ENCODE measurements at regions of chr4 and their contacts with region 1.

Region 1: DNA sequence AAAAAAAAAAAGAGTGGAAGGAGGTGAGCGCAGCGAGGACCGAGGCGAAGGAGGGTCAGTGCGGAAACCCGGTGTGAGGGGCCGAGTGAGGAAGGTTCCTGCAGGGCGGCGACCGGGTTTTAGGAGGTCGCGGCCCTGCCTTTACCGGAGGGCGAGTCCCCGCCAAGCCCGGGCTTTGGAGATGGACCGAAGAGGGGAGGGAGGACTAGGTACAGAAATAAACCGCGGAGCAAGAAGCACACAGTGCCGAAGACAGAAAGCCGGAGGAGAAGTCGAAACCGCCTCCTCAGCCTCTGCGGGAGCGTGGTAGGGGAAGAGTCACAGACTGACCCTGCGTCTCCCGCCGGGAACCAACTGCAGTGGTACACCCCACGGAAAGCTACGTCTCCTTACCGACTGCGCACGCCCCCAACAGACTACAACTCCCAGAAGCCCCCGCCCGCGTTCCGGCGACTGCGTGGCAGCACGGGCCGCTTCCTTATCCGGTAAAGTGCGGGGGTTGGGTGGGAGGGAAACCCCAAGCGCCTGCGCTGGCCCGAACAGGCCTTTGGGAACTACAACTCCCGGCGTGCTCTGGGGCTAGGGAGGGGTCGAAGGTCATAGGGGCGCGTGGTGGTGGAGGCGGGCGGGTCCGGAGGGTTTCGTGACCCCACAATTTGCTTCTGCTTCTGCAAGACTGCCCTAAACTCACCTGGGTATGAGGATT is at the start of gene NFXL1:
- DNase-seq: peak; percentile 98
- H3K4me3 Mint-ChIP-seq: peak within 1 kb of the TSS; percentile 97
- H3K27ac Mint-ChIP-seq: peak within 1 kb of the TSS; percentile 93
- H3K4me1 Mint-ChIP-seq: peaks cover 30% of the 10 kb centered on the region
- H3K27me3 Mint-ChIP-seq: no peaks in the 10 kb centered on the region
- total RNA-seq, gene NFXL1: 10.9 to 12.0 TPM

Region 2: DNA sequence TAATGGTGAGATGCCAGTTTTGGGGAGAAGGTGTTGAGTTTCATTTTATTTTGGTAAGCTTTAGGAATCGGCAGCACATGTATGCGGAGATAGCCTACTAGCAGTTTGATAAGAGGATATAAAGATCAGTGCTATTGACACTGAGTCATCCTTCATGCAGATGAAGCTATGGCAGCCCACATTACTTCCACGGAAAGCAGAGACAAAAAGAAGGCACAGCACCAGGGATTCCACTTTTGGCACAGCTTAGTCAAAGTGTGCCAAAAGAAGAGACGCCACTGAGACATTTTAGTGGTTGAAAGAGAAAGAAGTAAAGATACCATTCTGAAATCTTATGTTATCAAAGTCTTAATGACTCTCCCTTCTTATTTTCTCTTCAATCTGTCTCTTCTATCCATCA is 779.2 kb before region 1 on chr4:
- CTCF ChIA-PET with region 1: no interaction called
- POLR2A ChIA-PET with region 1: no interaction called
- intact Hi-C with region 1: no loop called
- DNase-seq: no peak
- H3K4me3 Mint-ChIP-seq: no peak overlapping the region
- H3K27ac Mint-ChIP-seq: no peak overlapping the region
- H3K4me1 Mint-ChIP-seq: no peaks in the 10 kb centered on the region
- H3K27me3 Mint-ChIP-seq: peaks cover 1% of the 10 kb centered on the region

Region 3: GRCh38 chr4:47463235-47463956 is 451.0 kb before region 1 on chr4 and contains the start of gene COMMD8:
- CTCF ChIA-PET with region 1: no interaction called
- POLR2A ChIA-PET with region 1: interaction called, 4 read pairs
- intact Hi-C with region 1: loop called (anchors 1 kb)
- DNase-seq: peak; percentile 98
- H3K4me3 Mint-ChIP-seq: peak within 1 kb of the TSS; percentile 85
- H3K27ac Mint-ChIP-seq: peak within 1 kb of the TSS; percentile 68
- H3K4me1 Mint-ChIP-seq: peaks cover 26% of the 10 kb centered on the region
- H3K27me3 Mint-ChIP-seq: no peaks in the 10 kb centered on the region
- total RNA-seq, gene COMMD8: 27.5 to 27.9 TPM

Region 4: DNA sequence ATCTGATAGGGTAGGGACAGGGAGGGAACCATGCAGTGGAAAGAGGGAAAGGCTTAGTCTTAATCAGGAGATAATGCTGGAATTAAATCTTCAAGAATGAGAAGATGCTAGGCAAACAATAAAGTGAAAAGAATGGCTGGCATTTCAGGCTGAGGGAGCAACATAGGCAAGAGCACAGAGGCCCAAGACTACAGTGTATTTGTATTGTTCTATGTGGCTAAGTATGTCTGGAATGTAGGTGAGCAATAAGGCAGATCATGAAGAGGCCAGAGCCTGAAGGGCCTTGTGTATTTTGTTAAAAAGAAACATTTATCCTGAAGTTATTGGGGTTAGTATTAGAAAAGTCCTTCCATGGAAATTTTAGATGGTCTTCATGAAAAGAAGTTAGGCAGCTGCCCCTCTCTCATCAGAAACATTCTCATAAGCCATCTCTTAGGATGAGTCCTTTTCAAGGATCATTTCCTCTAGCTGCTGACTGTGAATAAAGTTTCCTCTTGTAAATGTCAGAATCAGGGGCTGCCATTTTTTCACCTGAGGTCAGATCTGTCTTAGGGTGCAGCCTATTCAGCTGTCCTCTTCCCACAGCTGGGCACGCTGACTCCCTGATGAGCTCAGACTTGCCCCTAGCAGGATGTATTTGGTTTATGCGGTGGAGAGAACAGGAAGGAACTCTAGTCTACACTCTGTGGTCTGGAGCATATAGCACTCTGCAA is 383.0 kb before region 1 on chr4:
- CTCF ChIA-PET with region 1: no interaction called
- POLR2A ChIA-PET with region 1: no interaction called
- intact Hi-C with region 1: loop called (anchors 5 kb)
- DNase-seq: peak; percentile 66
- H3K4me3 Mint-ChIP-seq: no peak overlapping the region
- H3K27ac Mint-ChIP-seq: peak overlapping the region; percentile 1
- H3K4me1 Mint-ChIP-seq: peaks cover 33% of the 10 kb centered on the region
- H3K27me3 Mint-ChIP-seq: no peaks in the 10 kb centered on the region

Region 5: DNA sequence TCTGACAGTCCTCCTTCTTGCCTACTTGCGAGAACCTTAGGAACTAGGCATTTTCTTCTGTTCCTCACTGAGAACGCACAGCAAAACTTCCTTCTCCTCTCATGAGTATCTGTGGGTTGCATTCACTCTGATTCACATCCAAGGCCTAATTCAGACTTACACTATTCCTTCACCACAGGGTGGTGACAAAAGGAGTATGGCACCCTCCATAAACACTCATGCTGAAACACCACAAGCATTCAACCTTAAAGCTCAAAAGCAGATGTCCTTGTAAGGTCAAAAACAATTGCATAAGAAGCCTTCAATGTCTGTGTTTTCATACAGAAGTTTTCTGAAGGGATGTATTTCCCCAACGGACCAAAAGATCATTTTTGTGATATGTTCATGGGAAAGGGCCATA is 223.8 kb before region 1 on chr4:
- CTCF ChIA-PET with region 1: no interaction called
- POLR2A ChIA-PET with region 1: no interaction called
- intact Hi-C with region 1: no loop called
- DNase-seq: no peak
- H3K4me3 Mint-ChIP-seq: no peak overlapping the region
- H3K27ac Mint-ChIP-seq: no peak overlapping the region
- H3K4me1 Mint-ChIP-seq: peaks cover 2% of the 10 kb centered on the region
- H3K27me3 Mint-ChIP-seq: peaks cover 7% of the 10 kb centered on the region

Region 6: DNA sequence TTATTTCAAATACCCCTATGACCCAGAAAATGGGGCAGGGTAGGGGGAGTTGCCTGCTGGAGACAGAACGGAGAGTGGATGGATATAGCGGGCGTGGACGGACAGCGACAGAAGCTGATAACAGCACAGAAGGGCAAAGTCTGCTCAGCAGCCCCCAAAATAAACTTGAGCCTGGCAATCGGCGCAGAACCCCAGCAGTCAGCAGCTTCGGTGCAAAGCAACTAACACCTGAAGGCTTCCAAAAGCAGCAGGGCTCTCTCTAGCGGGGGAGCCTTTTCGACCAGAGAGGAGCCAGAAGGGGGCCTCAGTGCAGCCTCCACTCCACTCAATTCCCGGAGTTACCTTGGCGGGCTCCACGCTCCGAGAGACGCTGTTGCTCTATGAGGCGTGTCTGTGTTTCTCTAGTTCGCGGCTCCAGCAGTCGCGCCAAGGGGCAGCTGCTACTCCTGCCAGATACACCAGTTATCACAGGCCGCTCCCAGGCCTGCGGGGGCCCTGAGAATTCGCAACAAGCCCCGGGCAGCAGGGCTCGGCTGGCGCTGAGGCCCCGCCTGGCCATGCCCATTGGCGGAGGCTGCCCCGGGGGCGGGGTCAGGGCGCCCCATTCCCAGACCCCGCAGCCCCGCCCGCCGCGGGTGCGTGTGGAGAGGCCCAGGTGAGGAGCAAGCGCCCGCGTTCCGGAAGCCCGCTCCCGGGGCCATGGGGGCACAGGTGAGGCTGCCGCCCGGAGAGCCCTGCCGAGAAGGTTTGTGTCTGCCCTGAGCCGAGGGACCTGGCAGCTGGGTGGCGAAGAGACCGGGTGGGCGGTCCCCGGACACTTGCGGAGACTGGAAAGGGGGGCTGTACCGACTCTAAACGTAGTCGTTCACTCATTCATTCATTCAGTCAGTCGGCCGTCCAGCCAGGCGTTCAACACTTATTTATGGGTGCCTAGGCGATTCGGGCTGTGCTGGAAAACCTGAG is 102.0 kb after region 1 on chr4 and contains the starts of genes CNGA1 and NIPAL1:
- CTCF ChIA-PET with region 1: no interaction called
- POLR2A ChIA-PET with region 1: no interaction called
- intact Hi-C with region 1: loop called (anchors 2 kb)
- DNase-seq: peak; percentile 70
- H3K4me3 Mint-ChIP-seq: peak within 1 kb of the TSS; percentile 73
- H3K27ac Mint-ChIP-seq: no peak within 1 kb of the TSS
- H3K4me1 Mint-ChIP-seq: peaks cover 21% of the 10 kb centered on the region
- H3K27me3 Mint-ChIP-seq: peaks cover 25% of the 10 kb centered on the region
- total RNA-seq, gene CNGA1: 0.70 TPM in 1 of 2 experiments, not detected in the other
- total RNA-seq, gene NIPAL1: 1.3 to 1.9 TPM

Region 7: DNA sequence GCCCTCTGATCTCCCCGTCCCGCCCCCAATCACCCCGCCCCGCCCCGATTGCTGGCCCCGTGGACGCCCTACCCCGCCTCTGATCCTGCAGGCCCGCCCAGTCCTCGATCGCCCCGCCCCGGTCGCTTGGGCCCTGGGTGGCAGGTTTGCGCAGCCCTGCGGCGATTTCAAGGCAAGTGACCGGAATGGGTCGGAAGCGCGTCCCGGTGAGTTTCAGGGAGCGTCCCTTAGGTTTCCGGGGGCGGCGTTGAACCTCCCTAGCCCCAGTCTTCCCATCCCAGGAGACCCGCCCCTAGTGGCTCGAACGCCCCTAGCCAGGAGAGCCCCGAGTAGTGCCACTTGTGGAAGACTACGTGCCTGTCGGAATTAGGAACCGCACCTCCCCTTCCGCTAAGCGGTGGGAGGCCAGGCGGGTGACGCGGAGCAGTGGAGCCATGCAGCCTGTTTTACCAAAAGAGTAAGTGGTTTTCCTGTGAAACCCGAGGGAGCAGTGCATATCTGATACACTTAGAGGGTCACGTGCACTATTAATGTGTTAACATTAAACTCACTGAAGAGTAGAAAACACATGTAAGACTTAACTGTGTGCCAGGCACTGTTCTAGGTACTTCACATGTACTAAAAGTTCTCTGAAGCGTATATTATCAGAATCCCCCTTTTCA is 355.6 kb after region 1 on chr4:
- CTCF ChIA-PET with region 1: no interaction called
- POLR2A ChIA-PET with region 1: no interaction called
- intact Hi-C with region 1: loop called (anchors 10 kb)
- DNase-seq: peak; percentile 95
- H3K4me3 Mint-ChIP-seq: peak overlapping the region; percentile 91
- H3K27ac Mint-ChIP-seq: peak overlapping the region; percentile 75
- H3K4me1 Mint-ChIP-seq: peaks cover 23% of the 10 kb centered on the region
- H3K27me3 Mint-ChIP-seq: no peaks in the 10 kb centered on the region

Region 8: GRCh38 chr4:48635310-48635709 is 720.9 kb after region 1 on chr4:
- CTCF ChIA-PET with region 1: no interaction called
- POLR2A ChIA-PET with region 1: no interaction called
- intact Hi-C with region 1: no loop called
- DNase-seq: peak; percentile 46
- H3K4me3 Mint-ChIP-seq: no peak overlapping the region
- H3K27ac Mint-ChIP-seq: no peak overlapping the region
- H3K4me1 Mint-ChIP-seq: peaks cover 19% of the 10 kb centered on the region
- H3K27me3 Mint-ChIP-seq: no peaks in the 10 kb centered on the region